Activated naive CD4-positive, alpha-beta T cell treated with anti-CD3 and anti-CD28 coated beads, Interleukin-2, amount 10 ng/mL, durations not matched to agents 7 days and 5 days (primary cell): ENCODE measurements at regions of chr12 and their contacts with region 1.

Region 1: DNA sequence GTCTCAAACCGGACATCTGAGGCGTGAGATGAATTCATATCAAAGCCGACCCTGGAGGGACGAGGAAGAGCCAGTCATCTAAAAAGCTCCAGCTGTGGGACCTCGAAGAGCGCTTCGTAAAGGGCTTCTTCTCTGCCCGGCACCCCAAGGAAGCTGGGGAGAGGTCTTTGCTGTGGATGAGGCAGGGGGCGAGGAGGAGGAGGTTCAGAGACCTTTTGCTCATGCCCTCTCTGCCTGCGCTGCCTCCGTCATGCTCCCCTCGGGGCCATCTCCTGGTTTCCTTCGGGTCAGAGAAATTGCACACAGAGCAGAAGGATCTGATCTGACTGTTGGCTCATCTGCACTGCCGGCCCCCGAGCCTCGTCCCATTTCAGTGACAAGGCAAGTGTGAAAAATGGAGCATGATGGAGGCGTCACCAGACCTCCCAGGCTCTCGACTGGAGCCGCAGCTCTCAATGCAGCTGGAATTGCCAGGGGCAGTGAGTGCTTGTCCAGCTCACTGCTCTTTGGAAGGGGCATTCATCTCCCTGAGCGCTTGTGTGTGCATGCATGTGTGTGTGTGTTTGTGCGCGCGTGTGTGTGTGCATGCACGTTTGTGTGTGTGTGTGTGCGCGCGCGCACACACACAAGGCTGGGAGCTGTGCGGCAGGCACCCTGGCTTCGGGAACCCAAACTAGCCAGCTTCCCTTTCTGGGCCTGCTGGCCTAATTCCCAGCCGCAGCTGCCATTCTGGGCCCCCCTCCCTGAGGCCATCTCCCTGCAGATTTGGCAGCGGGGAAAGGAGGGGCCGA is 9.2 kb downstream of the CABP1 start:
- DNase-seq: no peak
- H3K4me3 Mint-ChIP-seq: peak overlapping the region; percentile 48
- H3K27ac Mint-ChIP-seq: no peak overlapping the region
- H3K4me1 Mint-ChIP-seq: peaks cover 14% of the 10 kb centered on the region
- H3K27me3 Mint-ChIP-seq: peaks cover 86% of the 10 kb centered on the region

Region 2: DNA sequence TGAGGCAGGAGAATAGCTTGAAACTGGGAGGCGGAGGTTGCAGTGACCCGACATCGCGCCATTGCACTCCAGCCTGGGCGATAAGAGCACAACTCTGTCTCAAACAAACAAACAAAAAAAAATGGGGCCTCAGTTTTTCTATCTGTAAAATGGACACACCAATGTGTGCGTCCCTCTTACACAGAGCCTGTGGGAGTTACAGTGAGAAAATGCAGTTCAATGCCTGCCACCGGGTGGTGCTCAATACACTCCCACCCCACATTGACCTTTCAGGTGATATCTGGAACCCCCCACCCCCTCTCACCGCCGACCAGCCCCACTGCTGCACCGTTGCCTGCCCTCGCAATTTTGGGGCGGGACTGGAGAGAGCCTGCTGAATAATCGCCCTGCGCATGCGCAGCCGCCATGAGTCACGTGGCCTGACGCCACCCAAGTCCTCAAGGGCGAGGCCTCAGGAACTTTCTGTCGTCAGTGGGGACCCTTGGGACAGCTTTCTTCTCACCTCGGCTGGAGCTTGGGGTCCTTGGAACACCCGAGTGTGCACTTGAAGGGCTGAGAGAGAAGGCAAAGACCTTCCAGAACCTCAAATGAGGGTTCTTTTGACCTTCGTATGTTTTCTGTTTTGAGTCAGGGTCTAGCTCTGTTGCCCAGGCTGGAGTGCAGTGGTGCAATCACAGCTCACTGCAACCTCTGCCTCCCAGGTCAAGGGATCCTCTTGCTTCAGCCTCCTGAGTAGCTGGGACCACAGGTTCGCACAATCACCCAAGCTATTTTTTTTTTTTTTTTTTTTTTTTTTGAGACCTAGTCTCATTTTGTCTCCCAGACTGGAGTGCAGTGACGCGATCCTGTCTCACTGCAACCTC is 23.8 kb before region 1 on chr12:
- CTCF ChIA-PET with region 1: interaction called, 10 read pairs
- DNase-seq: peak; percentile 37
- H3K4me3 Mint-ChIP-seq: no peak overlapping the region
- H3K27ac Mint-ChIP-seq: no peak overlapping the region
- H3K4me1 Mint-ChIP-seq: no peaks in the 10 kb centered on the region
- H3K27me3 Mint-ChIP-seq: peaks cover 24% of the 10 kb centered on the region

Region 3: DNA sequence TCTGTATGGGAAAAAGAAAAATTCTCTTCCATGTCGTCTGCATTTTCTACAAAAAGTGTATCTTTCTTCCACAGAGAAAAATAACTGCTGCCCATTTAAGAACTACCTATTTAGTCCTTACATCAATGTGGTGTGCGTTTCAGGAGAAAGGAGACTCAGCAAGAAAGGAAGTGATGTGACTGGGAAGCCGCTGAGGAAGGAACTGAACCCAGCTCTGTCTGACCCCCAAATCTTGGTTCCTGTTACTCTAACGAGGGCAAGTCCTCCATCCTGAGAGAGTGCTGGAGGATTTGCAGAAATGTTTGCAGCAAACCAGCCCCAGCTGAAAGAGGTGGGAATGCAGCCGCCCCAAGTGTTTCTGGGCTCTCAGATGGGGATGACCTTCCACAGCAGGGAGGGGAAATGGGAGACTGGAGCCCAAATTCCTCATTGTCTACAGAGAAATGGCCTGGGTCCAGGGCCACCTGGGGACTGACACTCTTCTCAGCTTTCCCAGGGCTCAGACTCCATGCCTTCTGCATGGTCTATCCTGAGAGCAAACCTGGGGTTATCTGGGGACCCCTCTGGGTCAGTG is 30.6 kb after region 1 on chr12:
- CTCF ChIA-PET with region 1: interaction called, 10 read pairs
- DNase-seq: no peak
- H3K4me3 Mint-ChIP-seq: no peak overlapping the region
- H3K27ac Mint-ChIP-seq: no peak overlapping the region
- H3K4me1 Mint-ChIP-seq: peaks cover 34% of the 10 kb centered on the region
- H3K27me3 Mint-ChIP-seq: peaks cover 11% of the 10 kb centered on the region

Region 4: GRCh38 chr12:120698665-120699064 is 49.0 kb after region 1 on chr12:
- CTCF ChIA-PET with region 1: interaction called, 45 read pairs
- DNase-seq: no peak
- H3K4me3 Mint-ChIP-seq: no peak overlapping the region
- H3K27ac Mint-ChIP-seq: no peak overlapping the region
- H3K4me1 Mint-ChIP-seq: peaks cover 8% of the 10 kb centered on the region
- H3K27me3 Mint-ChIP-seq: no peaks in the 10 kb centered on the region

Region 5: DNA sequence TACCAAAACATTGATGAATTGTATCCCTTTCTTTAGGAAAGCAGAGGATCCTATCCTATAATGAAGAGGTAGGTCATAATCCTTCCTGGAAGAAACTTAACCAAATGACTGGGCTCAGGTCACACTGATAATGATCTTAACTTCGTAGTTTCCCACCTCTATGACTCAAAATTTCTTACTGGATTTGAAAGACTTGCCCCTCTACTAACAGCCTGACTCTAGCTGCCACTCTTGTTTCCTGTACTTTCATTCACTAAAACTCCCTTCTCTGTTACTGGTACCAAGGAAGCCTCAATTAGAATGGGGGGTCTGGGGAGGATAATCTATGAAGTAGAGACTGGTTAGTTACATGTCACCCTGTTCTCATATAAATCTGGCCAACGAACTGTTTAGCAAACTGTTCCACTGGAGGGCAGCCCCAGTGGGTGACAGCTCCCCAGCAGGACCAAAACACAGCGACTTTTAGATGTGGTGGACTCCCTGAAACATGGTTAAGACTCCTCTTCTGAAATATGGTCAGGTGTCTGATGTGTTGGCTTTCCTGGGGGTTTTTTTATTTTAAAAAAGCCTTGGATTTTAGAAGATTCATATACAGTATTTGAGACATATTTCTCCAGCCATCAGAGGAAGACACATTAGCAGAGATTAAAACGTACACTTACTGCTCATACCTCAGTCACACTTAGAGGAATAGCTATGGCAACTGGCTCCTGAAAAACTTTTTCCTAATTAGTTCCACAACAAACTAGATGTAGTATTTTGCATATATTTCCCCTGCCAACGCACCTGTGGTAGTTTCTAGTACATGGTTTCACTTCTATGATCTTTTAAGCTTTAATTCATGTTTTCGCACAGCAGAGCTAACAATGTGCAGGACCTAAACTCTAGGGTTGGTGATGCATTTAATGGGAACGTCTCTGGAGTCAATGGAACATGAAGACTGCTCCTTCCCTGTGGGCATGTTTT is 148.3 kb after region 1 on chr12:
- CTCF ChIA-PET with region 1: no interaction called
- DNase-seq: no peak
- H3K4me3 Mint-ChIP-seq: no peak overlapping the region
- H3K27ac Mint-ChIP-seq: no peak overlapping the region
- H3K4me1 Mint-ChIP-seq: peaks cover 31% of the 10 kb centered on the region
- H3K27me3 Mint-ChIP-seq: no peaks in the 10 kb centered on the region

Region 6: GRCh38 chr12:120971299-120972179 is 321.9 kb after region 1 on chr12:
- CTCF ChIA-PET with region 1: interaction called, 30 read pairs
- DNase-seq: peak; percentile 55
- H3K4me3 Mint-ChIP-seq: no peak overlapping the region
- H3K27ac Mint-ChIP-seq: no peak overlapping the region
- H3K4me1 Mint-ChIP-seq: peaks cover 8% of the 10 kb centered on the region
- H3K27me3 Mint-ChIP-seq: peaks cover 14% of the 10 kb centered on the region